Activated T-helper 2 cell treated with anti-CD3 and anti-CD28 coated beads, Interferon-gamma antibody, Interleukin-2, Interleukin-4, amounts not matched to agents 10 μg/mL and 5 μg/mL and 100 μg/mL, durations not matched to agents 14 hours and 24 hours and 36 hours (primary cell): ENCODE measurements at regions of chr5 and their contacts with region 1.

Region 1: DNA sequence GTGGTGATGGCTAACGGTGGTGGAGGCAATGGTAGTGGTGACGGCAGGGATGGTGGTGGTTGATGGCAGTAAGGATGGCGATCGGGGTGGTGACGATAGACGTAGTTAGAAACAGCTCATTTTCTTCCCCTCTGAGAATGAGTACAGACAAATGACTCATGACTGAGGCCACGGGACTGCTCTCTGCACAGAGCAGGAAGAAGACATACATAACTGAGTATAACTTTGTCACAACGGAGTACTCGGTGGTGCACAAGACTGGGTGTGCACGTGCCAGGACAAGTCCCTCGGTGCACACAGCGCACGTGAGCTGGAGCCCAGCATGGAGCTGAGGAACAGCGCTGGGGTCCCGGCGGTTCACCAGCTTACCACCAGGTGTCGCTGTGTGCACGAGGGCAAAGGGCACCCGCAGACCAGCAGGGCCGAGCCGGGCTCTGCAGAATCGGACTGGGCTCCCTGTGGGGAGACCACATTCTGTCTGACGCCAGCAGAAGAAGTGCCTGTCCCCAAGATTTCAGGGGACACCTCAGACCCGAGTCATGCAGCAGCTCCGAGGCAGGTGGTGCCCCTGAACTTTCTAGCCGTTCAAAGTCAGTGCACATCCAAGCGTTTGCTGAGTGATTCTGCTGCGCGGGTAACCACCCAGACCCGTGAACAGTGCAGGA is 188.6 kb downstream of the FSTL4 start:
- DNase-seq: peak; percentile 52
- H3K4me3 Mint-ChIP-seq: no peak overlapping the region
- H3K27ac Mint-ChIP-seq: no peak overlapping the region
- H3K4me1 Mint-ChIP-seq: peaks cover 5% of the 10 kb centered on the region
- H3K27me3 Mint-ChIP-seq: peaks cover 13% of the 10 kb centered on the region

Region 2: GRCh38 chr5:133460172-133460758 is 36.5 kb after region 1 on chr5:
- intact Hi-C with region 1: loop called (anchors 2 kb)
- DNase-seq: no peak
- H3K4me3 Mint-ChIP-seq: no peak overlapping the region
- H3K27ac Mint-ChIP-seq: peak overlapping the region; percentile 33
- H3K4me1 Mint-ChIP-seq: peaks cover 29% of the 10 kb centered on the region
- H3K27me3 Mint-ChIP-seq: peaks cover 12% of the 10 kb centered on the region

Region 3: GRCh38 chr5:133531594-133531993 is 107.8 kb after region 1 on chr5:
- intact Hi-C with region 1: loop called (anchors 10 kb)
- DNase-seq: no peak
- H3K4me3 Mint-ChIP-seq: no peak overlapping the region
- H3K27ac Mint-ChIP-seq: no peak overlapping the region
- H3K4me1 Mint-ChIP-seq: peaks cover 3% of the 10 kb centered on the region
- H3K27me3 Mint-ChIP-seq: peaks cover 5% of the 10 kb centered on the region